Activated naive CD4-positive, alpha-beta T cell treated with anti-CD3 and anti-CD28 coated beads for 36 hours (primary cell): ENCODE measurements at regions of chr6 and their contacts with region 1.

Region 1: DNA sequence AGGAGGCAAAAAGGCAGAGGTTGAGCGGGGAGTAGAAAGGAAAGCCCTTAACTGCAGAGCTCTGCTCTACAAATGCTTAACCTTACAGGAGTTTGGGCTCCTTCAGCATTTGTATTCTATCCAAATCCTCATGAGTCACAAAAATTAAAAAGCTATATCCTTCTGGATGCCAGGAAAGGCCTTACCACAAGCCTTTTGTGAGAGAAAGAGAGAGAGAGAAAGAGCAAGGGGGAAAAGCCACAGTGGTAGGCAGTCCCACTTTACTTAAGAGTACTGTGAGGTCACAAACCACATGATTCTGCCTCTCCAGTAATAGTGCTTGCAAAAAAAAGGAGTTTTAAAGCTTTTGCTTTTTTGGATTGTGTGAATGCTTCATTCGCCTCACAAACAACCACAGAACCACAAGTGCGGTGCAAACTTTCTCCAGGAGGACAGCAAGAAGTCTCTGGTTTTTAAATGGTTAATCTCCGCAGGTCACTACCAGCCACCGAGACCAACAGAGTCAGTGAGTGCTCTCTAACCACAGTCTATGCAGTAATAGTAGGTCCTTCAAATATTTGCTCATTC is at the start of gene RUNX2:
- DNase-seq: peak; percentile 34
- H3K4me3 Mint-ChIP-seq: peak within 1 kb of the TSS; percentile 72
- H3K27ac Mint-ChIP-seq: peak within 1 kb of the TSS; percentile 50
- H3K4me1 Mint-ChIP-seq: peaks cover 56% of the 10 kb centered on the region
- H3K27me3 Mint-ChIP-seq: no peaks in the 10 kb centered on the region
- total RNA-seq, gene RUNX2: 3.1 to 3.6 TPM

Region 2: DNA sequence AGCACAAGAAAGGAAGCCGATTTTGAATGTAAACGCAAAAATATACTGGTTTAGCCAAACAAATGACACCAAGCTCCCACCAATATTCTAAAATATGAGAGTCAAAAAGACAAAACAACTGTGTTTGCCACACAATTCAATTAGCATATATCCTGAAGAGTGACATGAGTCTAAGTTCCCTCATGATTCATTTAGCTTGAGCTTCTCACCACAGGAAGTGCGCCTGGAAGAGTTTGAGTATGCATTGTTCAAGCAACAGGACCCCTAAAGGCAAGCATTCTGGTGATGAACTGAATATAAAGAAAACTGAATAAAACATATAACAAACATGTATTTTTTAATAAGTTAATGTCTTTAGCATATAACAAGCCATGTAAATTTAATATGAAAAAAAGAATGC is 115.1 kb before region 1 on chr6:
- CTCF ChIA-PET with region 1: no interaction called
- intact Hi-C with region 1: loop called (anchors 5 kb)
- DNase-seq: peak; percentile 20
- H3K4me3 Mint-ChIP-seq: no peak overlapping the region
- H3K27ac Mint-ChIP-seq: no peak overlapping the region
- H3K4me1 Mint-ChIP-seq: peaks cover 14% of the 10 kb centered on the region
- H3K27me3 Mint-ChIP-seq: no peaks in the 10 kb centered on the region

Region 3: DNA sequence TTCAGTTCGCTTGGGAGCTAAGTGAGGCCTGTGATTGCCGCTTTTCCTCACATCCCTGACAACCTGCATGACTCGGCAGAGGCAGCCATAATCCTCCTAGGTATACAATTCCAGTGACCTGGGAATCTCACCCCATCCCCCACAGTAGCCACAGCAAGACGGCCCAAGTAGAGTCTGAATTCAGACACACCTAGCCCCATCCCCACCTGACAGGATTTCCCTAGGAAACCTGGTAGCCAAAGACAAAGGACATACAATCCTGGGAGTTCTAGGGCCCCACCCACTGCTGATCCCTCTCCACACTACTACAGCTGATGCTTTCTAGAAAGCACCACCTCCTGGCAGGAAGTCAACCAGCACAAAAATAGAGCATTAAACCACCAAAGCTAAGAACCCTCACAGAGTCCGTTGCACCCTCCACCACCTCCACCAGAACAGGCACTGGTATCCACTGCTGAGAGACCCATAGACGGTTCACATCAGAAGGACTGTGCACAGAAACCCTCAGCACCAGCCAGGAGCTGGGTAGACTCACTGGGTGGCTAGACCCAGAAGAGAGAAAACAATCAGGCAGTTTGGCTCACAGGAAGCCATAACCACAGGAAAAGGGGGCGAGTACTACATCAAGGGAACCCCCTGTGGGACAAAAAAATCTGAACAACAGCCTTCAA is 17.8 kb before region 1 on chr6:
- CTCF ChIA-PET with region 1: no interaction called
- intact Hi-C with region 1: loop called (anchors 1 kb)
- DNase-seq: peak; percentile 48
- H3K4me3 Mint-ChIP-seq: no peak overlapping the region
- H3K27ac Mint-ChIP-seq: peak overlapping the region; percentile 75
- H3K4me1 Mint-ChIP-seq: peaks cover 58% of the 10 kb centered on the region
- H3K27me3 Mint-ChIP-seq: no peaks in the 10 kb centered on the region

Region 4: GRCh38 chr6:45350186-45350710 is 22.2 kb after region 1 on chr6:
- CTCF ChIA-PET with region 1: no interaction called
- intact Hi-C with region 1: no loop called
- DNase-seq: no peak
- H3K4me3 Mint-ChIP-seq: no peak overlapping the region
- H3K27ac Mint-ChIP-seq: no peak overlapping the region
- H3K4me1 Mint-ChIP-seq: peaks cover 20% of the 10 kb centered on the region
- H3K27me3 Mint-ChIP-seq: no peaks in the 10 kb centered on the region